Mucosa of descending colon (tissue), 3 donors: ENCODE measurements at regions of chr1 and their contacts with region 1.

Region 1: GRCh38 chr1:182397771-182398393 is 2.6 kb downstream of the TEDDM1 start:
- DNase-seq: peak in 1 of 3 donors; percentile 43
- ATAC-seq: peak; percentile 52
- H3K4me3 ChIP-seq: no peak overlapping the region
- H3K4me1 ChIP-seq: peaks cover 5% of the 10 kb centered on the region
- CTCF ChIP-seq: no peak

Region 2: GRCh38 chr1:182084487-182085316 is 313.2 kb before region 1 on chr1:
- intact Hi-C with region 1: loop called (anchors 2 to 10 kb)
- DNase-seq: peak; percentile 84 to 94 (median 91)
- ATAC-seq: peak; percentile 92
- H3K4me3 ChIP-seq: no peak overlapping the region
- H3K4me1 ChIP-seq: peaks cover 7% of the 10 kb centered on the region
- CTCF ChIP-seq: peak; percentile 64

Region 3: DNA sequence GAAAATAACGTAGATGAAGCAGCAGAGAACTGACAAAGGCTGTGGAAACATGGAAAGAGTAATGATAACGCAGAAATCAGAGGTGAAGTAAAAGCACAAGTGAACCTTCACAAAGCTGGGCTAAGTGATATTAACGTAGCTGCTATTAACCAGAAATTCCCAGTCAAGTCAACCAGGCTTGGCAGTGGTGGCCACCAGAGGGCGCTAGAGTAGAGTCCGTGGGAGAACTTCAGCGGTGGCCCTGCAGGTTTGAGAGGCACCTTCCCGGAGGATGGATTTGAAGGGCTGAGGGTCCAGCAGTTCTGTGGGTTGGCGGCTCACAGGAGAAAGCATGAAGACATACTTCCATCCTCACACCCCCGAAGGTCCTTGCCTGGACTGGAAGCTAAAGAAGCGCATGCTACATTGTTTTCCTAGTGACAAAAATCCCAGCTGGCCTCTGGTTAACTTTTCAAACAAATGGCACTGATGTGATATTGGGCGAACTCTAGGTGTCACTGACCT is 254.7 kb before region 1 on chr1:
- intact Hi-C with region 1: loop called (anchors 2 to 5 kb)
- DNase-seq: peak; percentile 89 to 97 (median 94)
- ATAC-seq: peak; percentile 84
- H3K4me3 ChIP-seq: no peak overlapping the region
- H3K4me1 ChIP-seq: peaks cover 13% of the 10 kb centered on the region
- CTCF ChIP-seq: peak; percentile 85

Region 4: GRCh38 chr1:182446033-182446669 is 48.3 kb after region 1 on chr1:
- intact Hi-C with region 1: no loop called
- DNase-seq: peak in 1 of 3 donors; percentile 62
- ATAC-seq: peak; percentile 84
- H3K4me3 ChIP-seq: no peak overlapping the region
- H3K4me1 ChIP-seq: no peaks in the 10 kb centered on the region
- CTCF ChIP-seq: peak; percentile 37

Region 5: DNA sequence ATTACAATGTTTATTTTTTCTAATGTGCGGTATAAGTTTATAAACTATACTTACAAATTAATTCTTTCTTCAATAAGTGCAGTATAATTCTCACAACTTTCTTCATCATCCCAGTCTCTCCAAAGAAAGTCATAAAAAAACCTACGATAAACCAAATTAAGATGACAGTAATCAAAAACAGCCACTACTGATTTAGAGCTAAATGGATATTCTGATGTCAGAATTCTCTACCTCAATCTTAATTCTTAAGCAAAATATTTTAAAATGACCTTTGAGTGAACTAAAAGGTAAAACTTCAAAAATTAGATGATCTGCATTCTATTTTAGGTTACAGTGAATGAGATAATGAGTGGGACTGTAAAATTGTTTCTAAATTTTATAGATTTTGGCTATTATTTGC is 541.5 kb after region 1 on chr1:
- intact Hi-C with region 1: no loop called
- DNase-seq: no peak
- ATAC-seq: no peak
- H3K4me3 ChIP-seq: no peak overlapping the region
- H3K4me1 ChIP-seq: no peaks in the 10 kb centered on the region
- CTCF ChIP-seq: no peak